Activated naive CD4-positive, alpha-beta T cell treated with anti-CD3 and anti-CD28 coated beads, Interleukin-2, amount 10 ng/mL, durations not matched to agents 7 days and 5 days (primary cell): ENCODE measurements at regions of chr1 and their contacts with region 1.

Region 1: GRCh38 chr1:44792783-44793714 is 5.1 kb upstream of the BEST4 start:
- DNase-seq: peak; percentile 17
- H3K4me3 Mint-ChIP-seq: no peak overlapping the region
- H3K27ac Mint-ChIP-seq: no peak overlapping the region
- H3K4me1 Mint-ChIP-seq: peaks cover 3% of the 10 kb centered on the region
- H3K27me3 Mint-ChIP-seq: peaks cover 26% of the 10 kb centered on the region

Region 2: GRCh38 chr1:44631647-44632539 is 161.2 kb before region 1 on chr1:
- CTCF ChIA-PET with region 1: no interaction called
- DNase-seq: peak; percentile 94
- H3K4me3 Mint-ChIP-seq: peak overlapping the region; percentile 84
- H3K27ac Mint-ChIP-seq: peak overlapping the region; percentile 97
- H3K4me1 Mint-ChIP-seq: peaks cover 41% of the 10 kb centered on the region
- H3K27me3 Mint-ChIP-seq: no peaks in the 10 kb centered on the region

Region 3: GRCh38 chr1:44819608-44820327 is 26.7 kb after region 1 on chr1:
- CTCF ChIA-PET with region 1: interaction called, 68 read pairs
- DNase-seq: peak; percentile 86
- H3K4me3 Mint-ChIP-seq: peak overlapping the region; percentile 88
- H3K27ac Mint-ChIP-seq: peak overlapping the region; percentile 100
- H3K4me1 Mint-ChIP-seq: peaks cover 58% of the 10 kb centered on the region
- H3K27me3 Mint-ChIP-seq: peaks cover 5% of the 10 kb centered on the region